Heart right ventricle (tissue), 16 donors: ENCODE measurements at regions of chr5 and their contacts with region 1.

Region 1: DNA sequence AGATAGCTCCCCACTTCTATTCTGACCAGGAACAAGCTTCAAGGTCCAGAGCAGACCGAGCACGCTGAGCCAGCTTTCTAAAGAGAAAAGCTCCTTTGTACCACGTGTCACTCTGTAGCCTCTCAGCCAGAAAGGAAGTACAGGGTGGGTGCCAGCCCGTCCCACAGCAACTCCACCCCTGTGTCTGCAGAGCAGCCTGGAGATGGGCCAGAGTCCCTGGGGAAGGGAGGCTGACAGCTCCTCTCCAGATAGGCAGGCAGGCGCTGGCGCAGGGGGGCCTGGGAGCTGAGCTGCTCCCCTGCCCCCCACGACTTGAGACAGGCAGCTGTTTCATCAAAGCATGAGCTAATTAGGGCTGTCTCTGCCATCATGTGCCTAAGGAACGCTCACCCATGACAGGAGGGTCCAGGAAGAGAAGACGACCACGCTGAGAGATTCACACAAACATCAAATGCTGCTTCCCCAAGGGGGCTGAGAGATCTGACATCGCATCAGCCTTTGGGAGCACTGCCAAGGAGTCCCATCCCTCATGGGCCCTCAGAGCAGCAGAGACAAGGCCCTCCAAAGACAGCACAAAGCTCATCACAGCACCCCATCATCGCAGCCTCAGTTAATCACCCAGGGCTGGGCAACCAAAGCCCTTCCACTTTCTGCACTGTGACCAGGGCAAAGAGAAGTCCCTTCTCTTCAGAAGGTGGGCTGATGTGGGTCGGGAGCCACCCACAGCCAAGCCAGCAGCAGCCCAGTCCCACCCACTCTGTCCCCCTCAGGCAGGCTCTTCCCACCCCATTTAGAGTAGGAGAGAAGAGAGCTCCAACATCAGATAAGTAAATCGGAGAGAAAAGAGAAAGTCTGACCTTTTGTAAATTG is 78.5 kb upstream of the LRRTM2 start:
- DNase-seq: peak; percentile 90 to 91
- ATAC-seq: peak; percentile 87 to 96 (median 94)
- H3K4me3 ChIP-seq: no peak overlapping the region
- H3K27ac ChIP-seq: peak overlapping the region; percentile 57 to 95 (median 86)
- H3K4me1 ChIP-seq: peaks cover 39 to 77% (median 66%) of the 10 kb centered on the region in 9 donors
- H3K27me3 ChIP-seq: no peaks in the 10 kb centered on the region
- CTCF ChIP-seq: no peak

Region 2: GRCh38 chr5:138869763-138870500 is 83.7 kb before region 1 on chr5:
- intact Hi-C with region 1: no loop called
- DNase-seq: no peak
- ATAC-seq: peak in 1 of 8 donors; percentile 41
- H3K4me3 ChIP-seq: no peak overlapping the region
- H3K27ac ChIP-seq: peak overlapping the region in 2 of 10 donors; percentile 15 to 27
- H3K4me1 ChIP-seq: peaks cover 11 to 94% (median 59%) of the 10 kb centered on the region in 9 donors
- H3K27me3 ChIP-seq: no peaks in the 10 kb centered on the region
- CTCF ChIP-seq: no peak

Region 3: DNA sequence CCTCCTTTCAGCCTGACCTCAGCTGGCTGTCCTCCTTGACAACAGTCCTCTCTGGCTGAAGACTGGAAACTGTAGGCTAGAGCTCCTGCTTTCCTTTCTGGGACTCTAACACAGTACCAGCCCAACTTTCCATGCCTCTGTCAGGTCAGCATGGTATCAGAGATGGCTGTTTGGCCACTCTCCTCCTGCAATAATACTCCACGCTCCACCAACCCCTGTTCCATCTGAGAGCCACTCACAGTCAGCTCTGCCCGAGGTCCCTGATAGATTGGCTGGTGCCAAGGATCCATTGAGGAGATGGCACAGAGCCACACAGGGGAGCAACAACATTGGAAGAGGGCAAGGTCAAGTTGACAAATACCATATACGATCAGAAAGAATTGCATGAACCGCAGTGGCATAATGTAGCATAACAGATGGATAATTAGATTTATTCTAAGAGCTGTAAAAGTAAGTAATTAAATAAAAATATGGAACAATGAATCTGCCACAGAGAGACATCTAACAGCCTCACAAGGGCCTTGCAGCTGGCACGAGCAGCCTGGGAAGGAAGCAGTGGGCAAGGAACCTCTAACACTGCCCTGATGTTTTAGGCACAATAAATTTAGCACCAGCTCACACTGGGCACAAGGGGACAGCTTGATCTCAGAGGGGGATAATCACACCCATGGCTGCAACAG is 15.8 kb after region 1 on chr5:
- intact Hi-C with region 1: loop called in 1 of 10 experiments (anchors 2 kb)
- DNase-seq: no peak
- ATAC-seq: peak in 4 of 8 donors; percentile 2 to 47 (median 20)
- H3K4me3 ChIP-seq: no peak overlapping the region
- H3K27ac ChIP-seq: peak overlapping the region in 8 of 10 donors; percentile 1 to 76 (median 48)
- H3K4me1 ChIP-seq: peaks cover 12 to 79% (median 46%) of the 10 kb centered on the region in 9 donors
- H3K27me3 ChIP-seq: no peaks in the 10 kb centered on the region
- CTCF ChIP-seq: no peak